ENCODE measurements at regions of chr15 and their contacts with region 1.

Region 1: DNA sequence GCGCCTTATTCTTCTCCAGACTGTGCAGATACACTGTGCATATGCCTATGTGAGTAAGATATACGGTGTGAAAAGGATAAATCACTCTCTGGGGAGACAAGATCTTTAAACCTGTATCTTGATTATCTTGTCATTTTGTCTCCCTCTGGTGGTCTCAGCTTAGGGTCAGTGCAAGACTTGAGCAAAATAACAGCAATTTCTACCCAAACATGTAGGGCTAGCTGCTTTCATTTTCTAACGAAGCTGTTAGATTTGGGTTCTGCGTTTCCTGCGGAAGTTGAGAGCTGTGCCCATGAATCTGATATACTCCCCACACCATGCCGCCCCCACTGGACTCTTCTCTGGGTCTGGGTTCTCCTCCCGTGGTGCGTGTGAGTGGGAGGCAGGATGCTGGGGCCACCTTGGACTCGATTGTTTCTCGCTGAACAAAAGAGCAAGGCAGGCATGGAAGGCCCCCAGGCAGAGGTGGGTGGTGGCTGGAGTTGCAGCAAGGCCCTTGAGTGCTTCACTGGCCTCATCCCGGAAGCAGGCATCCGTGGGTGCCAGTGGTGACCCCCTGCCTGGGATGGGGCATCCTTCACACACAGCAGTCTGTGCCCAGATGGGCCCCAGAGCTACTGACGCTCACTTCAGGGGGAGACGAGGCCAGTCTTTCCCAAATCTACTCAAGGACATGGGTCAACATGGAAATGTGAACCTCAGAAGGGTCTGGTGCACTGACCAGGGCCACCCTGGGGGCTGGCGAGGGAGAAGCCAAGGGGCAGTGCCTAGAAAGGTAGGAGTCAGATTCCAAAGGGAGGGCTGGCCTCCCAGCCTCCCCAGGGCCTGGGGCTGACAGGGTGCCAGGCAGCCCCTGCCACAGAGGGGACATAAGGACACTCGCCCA is 179.6 kb downstream of the NSMCE3 start:
- DNase-seq: no peak
- H3K4me3 ChIP-seq: no peak overlapping the region
- H3K27ac ChIP-seq: no peak overlapping the region
- H3K4me1 ChIP-seq: no peaks in the 10 kb centered on the region
- H3K27me3 ChIP-seq: no peaks in the 10 kb centered on the region
- CTCF ChIP-seq: no peak
- POLR2A ChIP-seq: no peak

Region 2: GRCh38 chr15:29018120-29018805 is 71.7 kb before region 1 on chr15:
- intact Hi-C with region 1: no loop called
- DNase-seq: no peak
- H3K4me3 ChIP-seq: no peak overlapping the region
- H3K27ac ChIP-seq: no peak overlapping the region
- H3K4me1 ChIP-seq: no peaks in the 10 kb centered on the region
- H3K27me3 ChIP-seq: no peaks in the 10 kb centered on the region
- CTCF ChIP-seq: no peak
- POLR2A ChIP-seq: no peak

Region 3: GRCh38 chr15:29045717-29046116 is 44.3 kb before region 1 on chr15:
- intact Hi-C with region 1: no loop called
- DNase-seq: no peak
- H3K4me3 ChIP-seq: no peak overlapping the region
- H3K27ac ChIP-seq: no peak overlapping the region
- H3K4me1 ChIP-seq: no peaks in the 10 kb centered on the region
- H3K27me3 ChIP-seq: no peaks in the 10 kb centered on the region
- CTCF ChIP-seq: no peak
- POLR2A ChIP-seq: no peak

Region 4: DNA sequence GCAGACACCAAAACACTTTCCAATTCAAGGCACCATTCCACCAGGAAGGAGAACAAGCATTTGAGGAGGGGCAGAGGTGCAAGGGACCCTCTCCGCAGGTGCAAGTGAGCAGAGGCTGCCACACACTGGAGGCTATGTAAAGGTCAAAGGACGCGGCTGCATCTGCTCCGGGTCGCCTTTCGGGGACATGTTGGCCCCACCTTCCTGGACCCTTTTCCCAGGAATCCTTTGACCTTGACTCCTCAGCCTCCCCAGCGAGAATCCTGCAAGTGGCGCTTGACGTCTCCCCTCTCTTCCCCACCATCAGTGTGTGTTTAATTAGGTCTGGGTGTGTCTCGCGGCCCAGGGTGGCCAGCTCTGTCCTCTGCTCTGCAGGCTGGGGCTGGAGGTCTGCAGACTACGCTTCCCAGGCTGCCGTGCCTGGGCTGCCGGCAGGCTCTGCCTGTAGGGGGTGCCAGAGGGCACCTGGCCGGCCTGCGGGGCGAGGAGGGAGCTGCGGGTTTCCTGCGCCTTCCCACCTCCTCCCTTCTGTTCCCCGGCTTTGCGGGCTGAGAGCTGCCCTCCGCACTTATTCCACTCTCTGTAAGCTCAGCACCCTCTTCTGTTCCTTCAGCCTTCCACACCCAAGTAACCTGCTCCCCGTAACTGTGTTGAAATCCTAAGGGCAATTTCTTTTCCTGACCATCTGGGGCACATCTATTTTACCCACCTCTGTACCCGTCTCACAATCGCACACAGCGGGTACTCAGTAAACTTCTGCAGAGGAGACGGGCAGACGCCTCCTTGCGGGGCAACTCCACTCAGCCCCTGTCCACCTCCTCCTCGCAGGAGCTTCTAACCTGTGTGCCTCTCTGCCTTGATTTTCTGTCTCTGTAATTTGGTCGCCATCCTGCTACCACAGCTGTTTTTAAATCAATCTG is 49.8 kb after region 1 on chr15:
- intact Hi-C with region 1: loop called (anchors 10 kb)
- DNase-seq: no peak
- H3K4me3 ChIP-seq: no peak overlapping the region
- H3K27ac ChIP-seq: no peak overlapping the region
- H3K4me1 ChIP-seq: no peaks in the 10 kb centered on the region
- H3K27me3 ChIP-seq: no peaks in the 10 kb centered on the region
- CTCF ChIP-seq: peak in 3 of 4 experiments; percentile 15 to 45 (median 32)
- POLR2A ChIP-seq: no peak

Region 5: GRCh38 chr15:29196290-29196689 is 106.3 kb after region 1 on chr15:
- intact Hi-C with region 1: no loop called
- DNase-seq: no peak
- H3K4me3 ChIP-seq: no peak overlapping the region
- H3K27ac ChIP-seq: no peak overlapping the region
- H3K4me1 ChIP-seq: no peaks in the 10 kb centered on the region
- H3K27me3 ChIP-seq: no peaks in the 10 kb centered on the region
- CTCF ChIP-seq: no peak
- POLR2A ChIP-seq: no peak

Region 6: DNA sequence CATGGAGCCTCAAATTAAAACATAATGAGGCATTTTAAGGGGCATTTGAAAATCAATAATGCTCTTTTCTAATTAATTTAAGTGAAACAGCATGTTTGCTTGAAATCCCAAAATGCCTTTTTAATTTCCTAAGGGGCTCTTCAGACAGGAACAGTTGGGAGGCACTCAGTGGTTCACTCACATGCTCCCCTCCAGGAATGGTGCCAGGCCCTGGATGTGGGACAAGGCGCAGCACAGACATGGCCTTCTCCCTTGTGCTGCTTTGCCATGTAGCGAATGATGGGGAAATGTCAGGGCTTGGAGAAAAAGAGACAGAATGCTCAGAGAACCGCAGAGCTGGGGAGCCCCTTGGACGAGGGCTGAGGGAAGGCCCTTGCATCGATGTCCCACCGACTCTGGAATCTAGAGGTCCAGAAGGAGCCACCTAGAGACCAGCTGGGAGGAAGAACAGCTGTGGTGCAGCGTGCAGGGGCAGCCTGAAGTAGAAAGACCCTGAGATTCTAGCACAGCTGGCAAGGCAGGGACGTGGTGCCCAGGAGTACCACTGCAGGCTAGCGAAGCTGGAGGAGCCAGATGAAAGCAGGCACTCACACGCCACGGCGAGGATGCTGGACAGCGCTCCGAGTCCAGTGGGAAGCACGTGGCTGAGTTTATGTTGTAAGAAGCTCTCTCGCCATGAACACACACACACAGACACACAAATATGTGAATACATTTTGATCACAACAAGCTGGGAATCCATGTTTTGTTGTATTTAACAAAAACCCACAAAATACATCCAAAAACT is 152.7 kb after region 1 on chr15:
- intact Hi-C with region 1: no loop called
- DNase-seq: no peak
- H3K4me3 ChIP-seq: no peak overlapping the region
- H3K27ac ChIP-seq: no peak overlapping the region
- H3K4me1 ChIP-seq: no peaks in the 10 kb centered on the region
- H3K27me3 ChIP-seq: no peaks in the 10 kb centered on the region
- CTCF ChIP-seq: no peak
- POLR2A ChIP-seq: no peak

Measured in uterus (tissue), 4 donors.